B cell (primary cell): ENCODE measurements at regions of chr10 and their contacts with region 1.

Region 1: GRCh38 chr10:128047351-128047750 is 78.9 kb downstream of the MKI67 start:
- DNase-seq: peak; percentile 87
- ATAC-seq: peak; percentile 99
- H3K4me3 ChIP-seq: peak overlapping the region; percentile 49 to 97 (median 66)
- H3K4me3 Mint-ChIP-seq: peak overlapping the region; percentile 88
- H3K27ac ChIP-seq: peak overlapping the region; percentile 67 to 74
- H3K27ac Mint-ChIP-seq: peak overlapping the region; percentile 85
- H3K4me1 ChIP-seq: peaks cover 41 to 63% of the 10 kb centered on the region in 2 donors
- H3K4me1 Mint-ChIP-seq: peaks cover 53% of the 10 kb centered on the region
- H3K27me3 ChIP-seq: no peaks in the 10 kb centered on the region
- H3K27me3 Mint-ChIP-seq: no peaks in the 10 kb centered on the region
- CTCF ChIP-seq: no peak

Region 2: DNA sequence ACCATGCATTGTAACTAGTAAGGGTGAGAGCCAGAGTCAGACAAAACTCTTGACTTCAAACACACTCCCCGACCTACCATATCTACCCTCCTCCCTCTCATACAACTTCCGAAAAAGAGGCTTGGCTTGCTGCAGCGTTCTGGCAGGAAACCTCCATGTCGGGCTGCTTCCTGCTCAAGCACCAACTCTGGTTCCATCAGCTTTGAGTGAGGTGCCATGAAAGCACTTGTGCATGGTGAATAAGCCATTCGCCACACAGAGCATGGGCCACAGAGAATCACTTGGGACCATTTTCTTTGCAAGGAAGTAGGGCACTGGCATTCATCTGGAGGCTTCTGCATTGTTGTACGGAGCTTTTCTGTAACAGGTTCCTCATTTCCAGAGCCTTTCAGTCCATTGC is 257.1 kb before region 1 on chr10:
- CTCF ChIA-PET with region 1: no interaction called
- POLR2A ChIA-PET with region 1: no interaction called
- intact Hi-C with region 1: no loop called
- DNase-seq: no peak
- ATAC-seq: no peak
- H3K4me3 ChIP-seq: no peak overlapping the region
- H3K4me3 Mint-ChIP-seq: no peak overlapping the region
- H3K27ac ChIP-seq: no peak overlapping the region
- H3K27ac Mint-ChIP-seq: no peak overlapping the region
- H3K4me1 ChIP-seq: no peaks in the 10 kb centered on the region
- H3K4me1 Mint-ChIP-seq: no peaks in the 10 kb centered on the region
- H3K27me3 ChIP-seq: peaks cover 0 to 6% (median 2%) of the 10 kb centered on the region in 4 experiments
- H3K27me3 Mint-ChIP-seq: peaks cover 28% of the 10 kb centered on the region
- CTCF ChIP-seq: no peak

Region 3: GRCh38 chr10:128011175-128011979 is 36.0 kb before region 1 on chr10:
- CTCF ChIA-PET with region 1: interaction called, 11 read pairs
- POLR2A ChIA-PET with region 1: no interaction called
- intact Hi-C with region 1: no loop called
- DNase-seq: peak; percentile 90
- ATAC-seq: peak; percentile 99
- H3K4me3 ChIP-seq: no peak overlapping the region
- H3K4me3 Mint-ChIP-seq: peak overlapping the region; percentile 58
- H3K27ac ChIP-seq: no peak overlapping the region
- H3K27ac Mint-ChIP-seq: peak overlapping the region; percentile 54
- H3K4me1 ChIP-seq: peaks cover 4 to 10% of the 10 kb centered on the region in 2 donors
- H3K4me1 Mint-ChIP-seq: peaks cover 10% of the 10 kb centered on the region
- H3K27me3 ChIP-seq: peaks cover 0 to 14% (median 0%) of the 10 kb centered on the region in 4 experiments
- H3K27me3 Mint-ChIP-seq: peaks cover 28% of the 10 kb centered on the region
- CTCF ChIP-seq: peak; percentile 97

Region 4: DNA sequence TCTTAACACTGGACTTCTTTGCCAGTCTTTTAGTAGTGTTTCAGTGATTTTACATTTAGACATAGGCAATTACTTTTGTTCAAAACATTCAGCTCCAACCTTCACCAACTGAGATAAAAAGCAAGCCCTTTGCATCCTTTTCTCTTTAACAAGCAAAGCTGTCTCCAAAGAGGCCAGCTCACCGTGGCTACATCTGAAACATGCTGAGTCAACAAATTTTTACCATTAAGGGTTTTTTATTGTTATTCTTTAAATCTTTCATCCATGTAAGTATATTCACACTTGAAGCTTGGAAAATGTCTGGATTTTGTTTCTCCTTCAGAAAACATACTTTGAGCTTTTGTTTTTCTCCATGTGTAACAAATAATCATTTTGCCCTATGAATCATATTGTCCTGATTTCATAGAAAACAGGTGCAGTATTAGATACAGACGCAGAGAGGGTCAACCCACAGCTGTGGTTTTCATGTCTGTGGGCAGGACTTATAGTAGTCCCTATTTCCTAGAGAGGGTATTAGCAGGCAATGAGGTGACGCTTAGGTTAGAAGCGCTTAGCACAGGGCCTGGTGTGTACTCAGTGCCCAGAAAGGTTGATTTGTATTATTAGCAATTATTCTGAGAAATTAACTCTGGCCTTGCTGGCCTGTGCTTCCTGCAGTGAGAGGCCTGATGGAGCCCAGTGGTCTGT is 20.6 kb before region 1 on chr10:
- CTCF ChIA-PET with region 1: no interaction called
- POLR2A ChIA-PET with region 1: no interaction called
- intact Hi-C with region 1: no loop called
- DNase-seq: no peak
- ATAC-seq: no peak
- H3K4me3 ChIP-seq: no peak overlapping the region
- H3K4me3 Mint-ChIP-seq: no peak overlapping the region
- H3K27ac ChIP-seq: no peak overlapping the region
- H3K27ac Mint-ChIP-seq: no peak overlapping the region
- H3K4me1 ChIP-seq: peaks cover 12 to 15% of the 10 kb centered on the region in 2 donors
- H3K4me1 Mint-ChIP-seq: peaks cover 11% of the 10 kb centered on the region
- H3K27me3 ChIP-seq: no peaks in the 10 kb centered on the region
- H3K27me3 Mint-ChIP-seq: no peaks in the 10 kb centered on the region
- CTCF ChIP-seq: no peak

Region 5: DNA sequence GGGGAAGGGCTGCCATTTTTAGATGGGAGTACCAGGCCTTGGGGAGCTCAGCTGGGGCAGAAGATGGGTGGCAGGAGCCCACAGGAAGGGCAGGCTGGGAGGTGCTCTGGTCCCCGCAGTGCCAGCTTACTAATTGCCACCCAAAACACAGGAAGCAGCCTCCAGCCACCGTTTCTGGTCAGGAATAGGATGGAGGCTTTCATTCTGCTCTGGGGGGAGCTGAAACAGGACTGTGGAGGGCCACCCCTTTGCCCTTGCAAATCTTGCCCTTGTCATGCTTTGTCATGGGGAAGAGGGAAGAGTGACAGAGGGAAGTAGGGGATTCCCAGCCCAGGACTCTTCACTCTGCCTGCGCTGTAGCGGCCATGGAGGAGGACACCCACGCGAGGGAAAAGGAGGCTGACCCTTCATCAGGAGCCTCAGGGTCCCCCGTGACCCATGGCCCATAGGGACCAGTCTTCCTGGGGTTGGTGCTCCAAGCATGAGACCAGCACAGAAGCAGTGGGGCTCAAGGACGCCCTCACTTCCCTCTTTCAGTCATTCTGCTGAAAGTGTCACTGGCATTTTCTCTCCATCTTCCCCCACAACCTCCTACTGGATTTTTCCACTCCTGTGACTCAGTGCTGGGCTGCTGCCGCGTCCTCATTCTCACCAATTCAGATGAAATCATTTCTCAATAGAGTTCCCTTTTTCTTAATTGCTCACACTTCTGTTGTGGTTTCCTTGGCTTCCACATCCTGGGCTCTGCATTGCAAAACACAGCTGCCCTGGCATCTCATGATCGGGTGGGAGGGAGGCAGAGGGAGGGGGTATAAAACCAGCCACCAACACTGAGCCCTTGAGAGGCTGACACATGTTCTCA is 17.0 kb after region 1 on chr10:
- CTCF ChIA-PET with region 1: interaction called, 524 read pairs
- POLR2A ChIA-PET with region 1: interaction called, 29 read pairs
- intact Hi-C with region 1: loop called (anchors 1 kb)
- DNase-seq: peak; percentile 92
- ATAC-seq: peak; percentile 74
- H3K4me3 ChIP-seq: peak overlapping the region; percentile 3 to 48 (median 31)
- H3K4me3 Mint-ChIP-seq: peak overlapping the region; percentile 75
- H3K27ac ChIP-seq: peak overlapping the region; percentile 86 to 89
- H3K27ac Mint-ChIP-seq: peak overlapping the region; percentile 85
- H3K4me1 ChIP-seq: peaks cover 47 to 65% of the 10 kb centered on the region in 2 donors
- H3K4me1 Mint-ChIP-seq: peaks cover 75% of the 10 kb centered on the region
- H3K27me3 ChIP-seq: no peaks in the 10 kb centered on the region
- H3K27me3 Mint-ChIP-seq: no peaks in the 10 kb centered on the region
- CTCF ChIP-seq: no peak

Region 6: GRCh38 chr10:128125944-128126764 is 78.8 kb after region 1 on chr10 and contains the start of gene MKI67:
- CTCF ChIA-PET with region 1: no interaction called
- POLR2A ChIA-PET with region 1: no interaction called
- intact Hi-C with region 1: loop called (anchors 2 kb)
- DNase-seq: peak; percentile 94
- ATAC-seq: peak; percentile 94
- H3K4me3 ChIP-seq: peak within 1 kb of the TSS; percentile 60 to 96 (median 73)
- H3K4me3 Mint-ChIP-seq: peak within 1 kb of the TSS; percentile 89
- H3K27ac ChIP-seq: peak within 1 kb of the TSS; percentile 72 to 74
- H3K27ac Mint-ChIP-seq: peak within 1 kb of the TSS; percentile 66
- H3K4me1 ChIP-seq: peaks cover 18 to 23% of the 10 kb centered on the region in 2 donors
- H3K4me1 Mint-ChIP-seq: peaks cover 29% of the 10 kb centered on the region
- H3K27me3 ChIP-seq: peaks cover 0 to 23% (median 19%) of the 10 kb centered on the region in 4 experiments
- H3K27me3 Mint-ChIP-seq: peaks cover 27% of the 10 kb centered on the region
- CTCF ChIP-seq: no peak
- total RNA-seq, gene MKI67: 0.47 and 0.58 TPM in 2 replicates

Region 7: DNA sequence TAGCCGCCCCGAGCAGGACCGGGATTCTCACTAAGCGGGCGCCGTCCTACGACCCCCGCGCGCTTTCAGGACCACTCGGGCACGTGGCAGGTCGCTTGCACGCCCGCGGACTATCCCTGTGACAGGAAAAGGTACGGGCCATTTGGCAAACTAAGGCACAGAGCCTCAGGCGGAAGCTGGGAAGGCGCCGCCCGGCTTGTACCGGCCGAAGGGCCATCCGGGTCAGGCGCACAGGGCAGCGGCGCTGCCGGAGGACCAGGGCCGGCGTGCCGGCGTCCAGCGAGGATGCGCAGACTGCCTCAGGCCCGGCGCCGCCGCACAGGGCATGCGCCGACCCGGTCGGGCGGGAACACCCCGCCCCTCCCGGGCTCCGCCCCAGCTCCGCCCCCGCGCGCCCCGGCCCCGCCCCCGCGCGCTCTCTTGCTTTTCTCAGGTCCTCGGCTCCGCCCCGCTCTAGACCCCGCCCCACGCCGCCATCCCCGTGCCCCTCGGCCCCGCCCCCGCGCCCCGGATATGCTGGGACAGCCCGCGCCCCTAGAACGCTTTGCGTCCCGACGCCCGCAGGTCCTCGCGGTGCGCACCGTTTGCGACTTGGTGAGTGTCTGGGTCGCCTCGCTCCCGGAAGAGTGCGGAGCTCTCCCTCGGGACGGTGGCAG is 1419.5 kb after region 1 on chr10 and contains the start of gene MGMT:
- CTCF ChIA-PET with region 1: no interaction called
- POLR2A ChIA-PET with region 1: no interaction called
- intact Hi-C with region 1: loop called (anchors 5 kb)
- DNase-seq: peak; percentile 94
- ATAC-seq: peak; percentile 99
- H3K4me3 ChIP-seq: peak within 1 kb of the TSS; percentile 6 to 85 (median 82)
- H3K4me3 Mint-ChIP-seq: peak within 1 kb of the TSS; percentile 89
- H3K27ac ChIP-seq: peak within 1 kb of the TSS; percentile 69 to 81
- H3K27ac Mint-ChIP-seq: peak within 1 kb of the TSS; percentile 85
- H3K4me1 ChIP-seq: peaks cover 13 to 18% of the 10 kb centered on the region in 2 donors
- H3K4me1 Mint-ChIP-seq: peaks cover 22% of the 10 kb centered on the region
- H3K27me3 ChIP-seq: no peaks in the 10 kb centered on the region
- H3K27me3 Mint-ChIP-seq: no peaks in the 10 kb centered on the region
- CTCF ChIP-seq: no peak
- total RNA-seq, gene MGMT: 84.5 and 87.7 TPM in 2 replicates